ENCODE measurements at regions of chr11 and their contacts with region 1.

Region 1: GRCh38 chr11:35347921-35348331 is 71.4 kb downstream of the SLC1A2 start:
- DNase-seq: no peak
- ATAC-seq: no peak
- H3K4me3 Mint-ChIP-seq: peak overlapping the region in 2 of 10 donors; percentile 4 to 49
- H3K27ac Mint-ChIP-seq: peak overlapping the region in 5 of 10 donors; percentile 3 to 96 (median 88)
- H3K4me1 Mint-ChIP-seq: peaks cover 27 to 60% (median 55%) of the 10 kb centered on the region in 4 donors
- H3K27me3 Mint-ChIP-seq: no peaks in the 10 kb centered on the region

Region 2: GRCh38 chr11:35330931-35331330 is 17.0 kb before region 1 on chr11:
- POLR2A ChIA-PET with region 1: interaction called, 12 read pairs
- DNase-seq: peak in 8 of 10 donors; percentile 10 to 69 (median 56)
- ATAC-seq: peak; percentile 95 to 96
- H3K4me3 Mint-ChIP-seq: peak overlapping the region in 9 of 10 donors; percentile 11 to 80 (median 39)
- H3K27ac Mint-ChIP-seq: peak overlapping the region; percentile 89 to 96 (median 91)
- H3K4me1 Mint-ChIP-seq: peaks cover 32 to 65% (median 61%) of the 10 kb centered on the region in 4 donors
- H3K27me3 Mint-ChIP-seq: no peaks in the 10 kb centered on the region

Region 3: GRCh38 chr11:35337136-35337918 is 10.6 kb before region 1 on chr11:
- POLR2A ChIA-PET with region 1: interaction called, 12 read pairs
- DNase-seq: no peak
- ATAC-seq: no peak
- H3K4me3 Mint-ChIP-seq: no peak overlapping the region
- H3K27ac Mint-ChIP-seq: peak overlapping the region in 1 of 10 donors; percentile 13
- H3K4me1 Mint-ChIP-seq: peaks cover 10 to 32% (median 21%) of the 10 kb centered on the region in 4 donors
- H3K27me3 Mint-ChIP-seq: no peaks in the 10 kb centered on the region

Region 4: DNA sequence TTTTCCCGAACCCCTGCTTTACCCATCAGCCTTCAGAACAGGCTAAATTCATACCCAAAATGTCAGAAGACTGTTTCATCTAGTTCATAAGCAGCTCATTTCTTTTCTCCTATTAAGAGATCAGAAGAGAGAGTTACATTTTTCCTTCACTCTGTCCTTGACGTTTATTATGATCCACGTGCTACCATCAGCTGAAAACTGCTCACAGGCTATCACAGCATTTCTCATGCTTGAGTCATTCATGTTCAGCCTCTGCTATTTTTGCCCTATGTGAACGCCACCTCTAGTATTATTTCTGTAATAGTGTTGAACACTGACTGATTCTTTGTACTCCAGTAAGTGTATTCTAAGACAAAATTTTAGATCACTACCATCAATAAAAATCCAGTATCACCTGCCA is 19.6 kb after region 1 on chr11:
- POLR2A ChIA-PET with region 1: no interaction called
- DNase-seq: no peak
- ATAC-seq: no peak
- H3K4me3 Mint-ChIP-seq: no peak overlapping the region
- H3K27ac Mint-ChIP-seq: no peak overlapping the region
- H3K4me1 Mint-ChIP-seq: peaks cover 0 to 3% (median 0%) of the 10 kb centered on the region in 4 donors
- H3K27me3 Mint-ChIP-seq: peaks cover 0 to 8% (median 3%) of the 10 kb centered on the region in 5 donors